GM13977 (cell line): ENCODE measurements at regions of chr9 and their contacts with region 1.

Region 1: GRCh38 chr9:120755827-120756434 is 37.3 kb downstream of the FBXW2 start:
- DNase-seq: peak; percentile 73
- CTCF ChIP-seq: peak; percentile 85

Region 2: GRCh38 chr9:120531683-120532300 is 224.1 kb before region 1 on chr9:
- in situ Hi-C with region 1: no loop called
- DNase-seq: peak; percentile 36
- CTCF ChIP-seq: peak; percentile 29

Region 3: DNA sequence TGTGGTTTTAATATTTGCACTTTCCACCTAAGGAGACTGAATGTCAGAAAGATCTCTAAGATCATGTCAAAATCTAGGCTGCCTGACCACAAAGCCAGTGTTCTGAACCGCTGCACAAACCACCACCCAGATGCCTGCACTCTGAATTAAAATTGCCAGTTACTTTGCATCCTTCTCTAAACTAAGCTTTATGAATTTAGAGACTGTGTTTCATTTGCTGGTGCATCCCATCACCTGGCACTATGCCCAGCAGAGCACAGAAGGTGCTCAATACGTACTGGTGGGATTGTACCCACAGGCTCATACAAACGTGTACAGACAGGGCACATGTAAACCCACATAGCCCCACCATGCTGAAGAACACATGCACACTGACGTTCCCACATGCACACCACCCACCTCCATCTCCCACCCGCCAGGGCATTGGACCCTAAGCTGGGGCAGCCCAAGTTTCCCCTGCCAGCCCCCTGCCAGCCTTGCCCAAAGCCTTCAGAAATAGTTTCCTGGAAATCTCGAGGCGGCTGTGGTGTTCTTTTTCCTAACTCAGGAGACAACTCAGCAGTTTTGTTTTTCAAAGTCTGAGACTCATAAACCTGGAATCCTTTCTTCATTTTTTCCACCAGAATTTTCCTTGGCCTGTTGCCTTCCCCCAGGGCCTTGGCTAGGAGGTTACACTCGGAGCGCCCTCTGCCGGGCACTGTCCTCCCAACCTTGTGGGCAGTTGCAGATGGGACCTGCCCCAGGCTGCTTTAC is 180.3 kb after region 1 on chr9:
- in situ Hi-C with region 1: loop called (anchors 25 kb)
- DNase-seq: peak; percentile 70
- CTCF ChIP-seq: peak; percentile 95

Region 4: DNA sequence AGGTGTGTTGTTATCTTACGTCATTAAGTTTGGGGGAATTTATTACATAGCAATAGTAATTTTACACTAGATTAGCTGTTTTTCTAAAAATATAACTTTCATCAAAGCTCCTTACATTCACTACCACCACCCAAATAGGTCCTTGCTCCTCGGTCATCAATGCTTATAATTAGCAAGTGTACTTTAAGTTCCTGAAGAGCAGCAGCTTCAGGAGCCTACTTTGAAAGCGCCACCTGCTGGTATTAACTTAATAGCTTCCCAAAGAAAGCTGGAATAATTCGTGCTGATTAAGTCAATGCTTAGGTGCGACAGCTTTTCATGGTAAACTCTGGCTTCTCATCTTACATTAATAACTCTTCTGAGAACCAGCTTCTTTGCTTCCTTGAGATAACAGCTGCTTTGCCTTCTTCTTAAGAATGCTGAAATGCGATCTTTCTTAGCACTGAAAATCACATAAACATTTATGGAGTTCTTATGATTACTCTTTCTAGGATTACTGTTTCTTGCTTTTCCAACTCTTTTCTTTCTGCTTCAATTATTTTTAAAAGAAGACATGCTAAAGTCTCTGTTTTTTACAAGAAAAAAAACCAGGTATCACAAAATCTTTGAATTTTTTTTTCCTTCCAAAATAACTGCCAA is 304.2 kb after region 1 on chr9:
- in situ Hi-C with region 1: loop called (anchors 10 kb)
- DNase-seq: peak; percentile 43
- CTCF ChIP-seq: peak; percentile 67

Region 5: GRCh38 chr9:121369595-121370265 is 613.8 kb after region 1 on chr9 and contains the start of gene STOM:
- in situ Hi-C with region 1: no loop called
- DNase-seq: peak; percentile 65
- CTCF ChIP-seq: no peak